ENCODE measurements at regions of chr19 and their contacts with region 1.

Region 1: DNA sequence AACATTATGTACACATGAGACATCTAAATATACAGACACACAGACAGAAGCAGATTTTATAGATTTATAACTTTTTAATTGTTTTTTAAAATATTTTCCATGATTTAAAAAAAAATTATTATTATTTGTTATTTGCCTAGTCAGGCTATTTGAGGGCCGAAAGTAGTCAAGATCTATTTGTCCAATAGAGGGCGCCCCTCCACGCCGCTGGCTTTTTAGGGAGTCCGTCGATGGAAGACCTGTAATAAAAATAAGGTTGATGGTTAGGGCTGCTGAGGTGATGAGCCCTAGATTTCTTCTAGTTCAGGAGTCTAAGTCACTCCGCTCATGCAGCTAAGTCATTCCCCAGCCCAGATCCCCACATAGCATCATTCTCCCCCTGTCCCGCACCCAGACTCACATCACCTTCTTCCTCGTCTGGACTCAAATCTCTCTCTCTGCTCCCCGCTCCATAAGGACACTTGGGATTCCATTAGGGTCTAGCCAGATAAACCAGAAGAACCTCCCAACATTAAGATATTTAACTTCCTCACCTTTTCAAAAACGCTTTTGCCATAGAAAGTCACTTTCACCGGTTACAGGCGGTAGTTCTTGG is 33.9 kb upstream of the CEACAM21 start:
- DNase-seq: peak; percentile 66
- H3K4me3 Mint-ChIP-seq: peak overlapping the region; percentile 68
- H3K27ac Mint-ChIP-seq: peak overlapping the region; percentile 73
- H3K4me1 Mint-ChIP-seq: peaks cover 82% of the 10 kb centered on the region
- H3K27me3 Mint-ChIP-seq: no peaks in the 10 kb centered on the region

Region 2: GRCh38 chr19:40609561-40610395 is 932.3 kb before region 1 on chr19:
- intact Hi-C with region 1: loop called (anchors 10 kb)
- DNase-seq: peak; percentile 86
- H3K4me3 Mint-ChIP-seq: peak overlapping the region; percentile 81
- H3K27ac Mint-ChIP-seq: peak overlapping the region; percentile 86
- H3K4me1 Mint-ChIP-seq: peaks cover 44% of the 10 kb centered on the region
- H3K27me3 Mint-ChIP-seq: no peaks in the 10 kb centered on the region

Region 3: GRCh38 chr19:41531438-41532311 is 10.4 kb before region 1 on chr19:
- intact Hi-C with region 1: loop called (anchors 1 kb)
- DNase-seq: peak; percentile 87
- H3K4me3 Mint-ChIP-seq: peak overlapping the region; percentile 82
- H3K27ac Mint-ChIP-seq: peak overlapping the region; percentile 87
- H3K4me1 Mint-ChIP-seq: peaks cover 91% of the 10 kb centered on the region
- H3K27me3 Mint-ChIP-seq: no peaks in the 10 kb centered on the region

Region 4: GRCh38 chr19:41563854-41564514 is 21.9 kb after region 1 on chr19:
- intact Hi-C with region 1: loop called (anchors 1 kb)
- DNase-seq: no peak
- H3K4me3 Mint-ChIP-seq: peak overlapping the region; percentile 61
- H3K27ac Mint-ChIP-seq: peak overlapping the region; percentile 52
- H3K4me1 Mint-ChIP-seq: peaks cover 63% of the 10 kb centered on the region
- H3K27me3 Mint-ChIP-seq: peaks cover 2% of the 10 kb centered on the region

Region 5: GRCh38 chr19:41597600-41598041 is 55.5 kb after region 1 on chr19:
- intact Hi-C with region 1: loop called (anchors 1 kb)
- DNase-seq: peak; percentile 59
- H3K4me3 Mint-ChIP-seq: no peak overlapping the region
- H3K27ac Mint-ChIP-seq: no peak overlapping the region
- H3K4me1 Mint-ChIP-seq: peaks cover 11% of the 10 kb centered on the region
- H3K27me3 Mint-ChIP-seq: peaks cover 24% of the 10 kb centered on the region